K562 (cell line): ENCODE measurements at regions of chr19 and their contacts with region 1.

Region 1: GRCh38 chr19:48391107-48391986 is at the start of gene KDELR1:
- DNase-seq: peak; percentile 78 to 92 (median 90)
- ATAC-seq: peak; percentile 83
- H3K4me3 ChIP-seq: peak within 1 kb of the TSS; percentile 88
- H3K27ac ChIP-seq: peak within 1 kb of the TSS; percentile 92
- H3K4me1 ChIP-seq: peaks cover 13 to 63% of the 10 kb centered on the region in 2 experiments; a peak in 4 of 5 replicates
- H3K27me3 ChIP-seq: no peaks in the 10 kb centered on the region
- CTCF ChIP-seq: peak; percentile 95 to 97 (median 96)
- EP300 ChIP-seq: no peak
- POLR2A ChIP-seq: peak; percentile 79
- RAD21 ChIP-seq: peak; percentile 19; a peak in 3 of 4 replicates
- polyA plus RNA-seq, gene KDELR1: 6.1 to 11.1 TPM

Region 2: DNA sequence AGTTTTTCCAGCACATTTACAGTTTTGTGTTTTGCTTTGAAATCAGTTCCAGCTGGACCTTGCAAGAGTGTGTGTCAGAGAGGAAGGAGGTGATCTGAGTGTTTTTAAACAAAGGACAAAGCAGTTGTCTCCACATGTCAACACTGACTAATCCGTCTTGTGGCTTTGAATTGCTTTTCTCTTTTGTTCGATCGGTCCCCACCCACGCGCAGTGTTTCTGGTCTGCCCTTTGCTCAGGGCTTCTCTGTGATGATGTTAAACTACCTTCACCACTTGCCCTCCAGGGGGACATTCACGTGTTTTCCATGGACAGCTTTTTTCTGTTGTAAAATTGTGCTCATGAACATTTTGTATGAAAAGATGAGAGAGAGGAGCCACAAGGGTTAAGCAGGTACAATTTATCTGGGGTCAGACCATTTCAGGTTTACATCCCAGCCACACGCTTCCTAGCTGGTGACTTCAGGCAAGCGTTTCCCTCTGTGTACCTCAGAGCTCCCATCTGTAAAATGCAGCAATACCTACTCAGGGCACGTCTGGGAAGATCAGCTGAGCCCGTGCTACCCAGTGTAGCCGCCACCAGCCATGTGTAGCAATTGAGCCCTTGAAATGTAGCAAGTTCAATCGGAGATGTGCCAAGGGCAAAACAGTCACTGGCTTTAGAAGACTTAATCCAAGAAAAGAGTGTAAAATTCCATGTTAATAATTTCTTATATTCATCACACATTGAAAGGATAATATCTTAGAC is 267.3 kb before region 1 on chr19:
- CTCF ChIA-PET with region 1: no interaction called
- POLR2A ChIA-PET with region 1: no interaction called
- in situ Hi-C with region 1: no loop called
- intact Hi-C with region 1: no loop called
- DNase-seq: no peak
- ATAC-seq: no peak
- H3K4me3 ChIP-seq: no peak overlapping the region
- H3K27ac ChIP-seq: no peak overlapping the region
- H3K4me1 ChIP-seq: peaks cover 3 to 7% of the 10 kb centered on the region in 2 experiments; a peak in 2 of 5 replicates
- H3K27me3 ChIP-seq: no peaks in the 10 kb centered on the region
- CTCF ChIP-seq: no peak
- EP300 ChIP-seq: no peak
- POLR2A ChIP-seq: no peak
- RAD21 ChIP-seq: no peak

Region 3: DNA sequence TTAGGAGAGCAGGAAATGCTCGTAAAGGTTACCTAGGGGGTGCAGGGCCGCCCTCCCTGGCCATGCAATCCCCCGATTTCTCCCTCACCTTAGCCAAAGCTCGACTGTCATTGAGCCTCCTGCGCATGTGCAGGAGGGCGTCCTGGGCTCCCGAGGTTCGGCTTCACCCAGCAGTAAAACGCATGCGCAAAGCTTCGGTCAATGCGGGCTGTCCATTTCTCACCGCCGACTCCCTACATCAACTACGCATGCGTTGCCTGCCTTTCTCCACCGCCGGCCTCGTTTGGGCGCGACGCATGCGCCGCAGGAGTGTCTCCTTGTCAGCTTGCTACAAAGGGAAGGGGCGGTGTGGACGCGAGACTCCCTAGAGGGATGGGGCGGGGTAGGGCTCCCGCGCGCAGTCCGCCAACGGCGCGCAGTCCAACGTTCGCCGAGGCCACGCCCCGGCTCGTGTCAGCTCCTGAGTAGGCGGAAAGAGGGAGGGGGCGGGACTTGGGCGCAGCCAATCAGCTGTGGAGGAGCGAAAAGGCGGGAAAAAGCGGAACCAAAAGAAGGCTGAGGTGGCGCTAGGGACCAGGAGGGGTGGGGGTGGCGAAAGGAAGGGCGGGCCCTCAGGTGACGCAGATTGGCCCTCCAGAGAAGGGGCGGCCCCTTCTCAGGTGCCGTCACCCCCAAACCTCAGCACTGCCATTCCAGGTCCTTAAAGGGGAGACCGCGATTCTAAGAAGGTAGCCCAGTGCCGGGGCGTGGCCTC is 27.4 kb before region 1 on chr19 and contains the starts of genes SYNGR4 and TMEM143:
- CTCF ChIA-PET with region 1: no interaction called
- POLR2A ChIA-PET with region 1: interaction called, 13 read pairs
- in situ Hi-C with region 1: no loop called
- intact Hi-C with region 1: loop called (anchors 2 kb)
- DNase-seq: peak; percentile 98 to 100 (median 99)
- ATAC-seq: peak; percentile 95
- H3K4me3 ChIP-seq: peak within 1 kb of the TSS; percentile 52
- H3K27ac ChIP-seq: peak within 1 kb of the TSS; percentile 96
- H3K4me1 ChIP-seq: peaks cover 8 to 29% of the 10 kb centered on the region in 2 experiments
- H3K27me3 ChIP-seq: no peaks in the 10 kb centered on the region
- CTCF ChIP-seq: peak in 1 of 3 experiments; percentile 12; a peak in 1 of 6 replicates
- EP300 ChIP-seq: peak; percentile 63; the same call in 1 of the 2 replicates
- POLR2A ChIP-seq: 0 out of 2 replicates have a peak, but pooled peaks have one; percentile 13
- RAD21 ChIP-seq: no peak
- polyA plus RNA-seq, gene SYNGR4: 0.14 TPM in 1 of 2 experiments, not detected in the other
- polyA plus RNA-seq, gene TMEM143: 0.66 to 0.67 TPM

Region 4: GRCh38 chr19:48492925-48493717 is 101.8 kb after region 1 on chr19:
- CTCF ChIA-PET with region 1: no interaction called
- POLR2A ChIA-PET with region 1: no interaction called
- in situ Hi-C with region 1: no loop called
- intact Hi-C with region 1: loop called (anchors 10 kb)
- DNase-seq: peak; percentile 95 to 98 (median 97)
- ATAC-seq: peak; percentile 94
- H3K4me3 ChIP-seq: peak overlapping the region; percentile 63
- H3K27ac ChIP-seq: peak overlapping the region; percentile 86
- H3K4me1 ChIP-seq: peaks cover 34 to 64% of the 10 kb centered on the region in 2 experiments
- H3K27me3 ChIP-seq: no peaks in the 10 kb centered on the region
- CTCF ChIP-seq: no peak
- EP300 ChIP-seq: no peak
- POLR2A ChIP-seq: peak; percentile 75
- RAD21 ChIP-seq: no peak

Region 5: DNA sequence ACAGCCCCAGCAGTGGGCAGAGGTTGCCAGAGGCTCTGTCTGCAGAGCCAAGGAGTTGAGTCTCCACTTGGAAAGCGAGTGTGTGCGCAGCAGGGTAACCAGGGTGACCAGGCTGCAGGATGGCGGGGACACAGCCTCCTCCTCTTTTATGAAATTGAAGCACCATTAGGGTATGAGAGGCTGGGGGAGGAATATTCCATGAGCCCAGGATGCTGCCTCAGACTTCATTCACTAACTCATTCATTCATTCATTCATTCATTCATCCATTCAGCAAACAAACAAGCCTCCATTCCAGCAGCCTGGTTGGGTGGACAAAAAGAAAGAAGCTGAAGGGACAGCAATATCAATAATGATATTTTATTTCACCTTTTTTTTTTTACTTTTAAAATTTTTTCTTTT is 126.9 kb after region 1 on chr19:
- CTCF ChIA-PET with region 1: no interaction called
- POLR2A ChIA-PET with region 1: no interaction called
- in situ Hi-C with region 1: no loop called
- intact Hi-C with region 1: no loop called
- DNase-seq: no peak
- ATAC-seq: no peak
- H3K4me3 ChIP-seq: no peak overlapping the region
- H3K27ac ChIP-seq: no peak overlapping the region
- H3K4me1 ChIP-seq: peaks cover 0 to 19% of the 10 kb centered on the region in 2 experiments; a peak in 2 of 5 replicates
- H3K27me3 ChIP-seq: no peaks in the 10 kb centered on the region
- CTCF ChIP-seq: no peak
- EP300 ChIP-seq: no peak
- POLR2A ChIP-seq: no peak
- RAD21 ChIP-seq: no peak